ENCODE measurements at regions of chr6 and their contacts with region 1.

Region 1: GRCh38 chr6:17865798-17866725 is 121.4 kb downstream of the KIF13A start:
- DNase-seq: peak; percentile 95
- ATAC-seq: peak; percentile 77
- H3K4me3 ChIP-seq: no peak overlapping the region
- H3K27ac ChIP-seq: no peak overlapping the region; the same call in 1 of the 2 replicates
- H3K4me1 ChIP-seq: peaks cover 20% of the 10 kb centered on the region
- H3K27me3 ChIP-seq: no peaks in the 10 kb centered on the region
- CTCF ChIP-seq: no peak
- POLR2A ChIP-seq: no peak
- RAD21 ChIP-seq: peak; percentile 22

Region 2: DNA sequence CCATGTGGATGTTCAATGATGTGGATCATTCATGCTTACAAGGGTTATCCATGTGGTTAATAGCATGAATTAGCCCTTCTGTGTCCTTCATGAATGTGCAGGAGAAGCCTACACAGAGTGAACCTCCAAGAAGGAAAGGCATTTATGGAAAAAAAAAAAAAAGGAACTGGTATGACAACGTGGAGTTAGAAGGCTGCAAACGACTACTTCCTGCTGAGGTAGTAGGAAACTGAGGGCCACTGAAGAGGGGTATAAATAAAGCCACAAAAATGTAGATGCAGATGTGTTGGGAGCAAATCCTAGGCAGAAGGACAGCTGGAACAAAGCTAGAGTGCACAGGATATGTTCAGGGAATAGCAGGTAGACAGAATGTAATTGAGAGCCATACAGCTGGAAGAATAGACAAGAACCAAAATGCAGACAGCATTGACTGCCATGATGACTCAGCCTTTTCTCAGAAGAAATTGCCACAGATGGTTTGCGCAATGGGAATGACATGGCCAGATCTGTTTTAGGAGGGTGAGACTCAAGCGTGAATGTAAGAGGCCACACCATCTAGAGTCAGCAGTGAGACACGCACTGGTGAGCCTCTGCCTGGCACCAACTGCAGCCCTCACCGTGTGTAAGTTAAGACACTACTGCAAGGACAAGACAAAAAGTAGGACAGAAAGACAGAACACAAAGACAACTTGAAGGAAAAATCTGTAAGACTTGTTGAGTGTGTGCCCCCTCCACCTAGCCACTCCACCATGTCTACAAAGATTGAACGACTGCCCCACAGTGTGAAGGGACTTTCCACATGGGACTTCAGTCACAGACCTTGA is 41.6 kb after region 1 on chr6:
- CTCF ChIA-PET with region 1: no interaction called
- POLR2A ChIA-PET with region 1: no interaction called
- dilution Hi-C with region 1: no loop called
- in situ Hi-C with region 1: no loop called
- intact Hi-C with region 1: loop called (anchors 5 kb)
- DNase-seq: peak; percentile 100
- ATAC-seq: peak; percentile 92
- H3K4me3 ChIP-seq: no peak overlapping the region
- H3K27ac ChIP-seq: peak overlapping the region; percentile 87
- H3K4me1 ChIP-seq: peaks cover 25% of the 10 kb centered on the region
- H3K27me3 ChIP-seq: no peaks in the 10 kb centered on the region
- CTCF ChIP-seq: peak; percentile 44
- POLR2A ChIP-seq: no peak
- RAD21 ChIP-seq: peak; percentile 60

Region 3: GRCh38 chr6:17987576-17988421 is 121.7 kb after region 1 on chr6 and contains the start of gene KIF13A:
- CTCF ChIA-PET with region 1: no interaction called
- POLR2A ChIA-PET with region 1: no interaction called
- dilution Hi-C with region 1: no loop called
- in situ Hi-C with region 1: loop called (anchors 10 kb)
- intact Hi-C with region 1: loop called (anchors 5 kb)
- DNase-seq: peak; percentile 59
- ATAC-seq: peak; percentile 87
- H3K4me3 ChIP-seq: peak within 1 kb of the TSS; percentile 84
- H3K27ac ChIP-seq: peak within 1 kb of the TSS; percentile 85
- H3K4me1 ChIP-seq: peaks cover 10% of the 10 kb centered on the region
- H3K27me3 ChIP-seq: no peaks in the 10 kb centered on the region
- CTCF ChIP-seq: peak; percentile 41
- POLR2A ChIP-seq: no peak
- RAD21 ChIP-seq: peak; percentile 35
- total RNA-seq, gene KIF13A: 51.8 and 53.0 TPM in 2 replicates

Region 4: DNA sequence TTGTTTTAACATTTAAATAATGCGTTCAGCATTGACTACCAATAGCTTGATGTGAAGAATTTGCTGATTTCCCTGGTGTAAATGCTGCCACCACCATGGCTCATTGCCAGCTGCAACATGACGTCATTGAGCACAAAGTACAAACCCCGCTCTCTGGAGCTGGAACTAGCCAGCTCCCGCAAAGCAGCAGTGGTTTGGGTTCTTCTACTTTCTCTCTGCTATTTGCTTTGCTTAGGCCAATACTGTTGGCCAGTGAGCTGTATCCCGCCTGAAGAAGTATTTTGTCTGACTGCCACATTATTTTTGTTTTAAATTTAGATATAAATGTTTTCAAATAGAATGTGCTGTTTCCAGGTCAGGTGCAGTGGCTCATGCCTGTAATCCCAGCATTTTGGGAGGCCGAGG is 168.7 kb after region 1 on chr6:
- CTCF ChIA-PET with region 1: no interaction called
- POLR2A ChIA-PET with region 1: interaction called, 11 read pairs
- dilution Hi-C with region 1: no loop called
- in situ Hi-C with region 1: no loop called
- intact Hi-C with region 1: no loop called
- DNase-seq: peak; percentile 19
- ATAC-seq: no peak
- H3K4me3 ChIP-seq: no peak overlapping the region
- H3K27ac ChIP-seq: no peak overlapping the region
- H3K4me1 ChIP-seq: peaks cover 1% of the 10 kb centered on the region; the same call in 1 of the 2 replicates
- H3K27me3 ChIP-seq: 0 out of 2 replicates have a peak, but pooled peaks cover 2% of the 10 kb centered on the region
- CTCF ChIP-seq: no peak
- POLR2A ChIP-seq: no peak
- RAD21 ChIP-seq: no peak